Natural killer cell (primary cell): ENCODE measurements at regions of chr2 and their contacts with region 1.

Region 1: DNA sequence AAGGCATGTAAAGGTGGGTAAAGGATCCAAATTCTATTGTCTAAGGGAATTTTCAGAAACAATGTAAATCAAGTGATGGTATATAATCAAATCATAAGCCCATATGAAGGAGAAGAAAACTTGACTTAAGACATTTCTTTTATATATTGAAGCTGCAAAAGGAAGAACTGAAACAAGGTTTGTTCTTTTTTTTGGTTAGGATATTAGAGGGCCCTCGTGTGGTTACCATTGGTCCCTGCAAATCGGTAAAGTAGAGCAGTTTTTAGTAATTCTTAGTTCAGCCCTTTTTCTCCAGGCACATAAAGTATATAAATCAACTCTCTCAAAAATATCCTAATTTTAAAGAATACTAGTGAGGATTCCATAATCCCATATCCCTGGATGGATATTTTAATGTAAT is 105.6 kb upstream of the STK17B start:
- DNase-seq: peak in 1 of 2 donors; percentile 80
- ATAC-seq: peak; percentile 74 to 78 (median 77)
- H3K4me3 ChIP-seq: no peak overlapping the region
- H3K4me3 Mint-ChIP-seq: peak overlapping the region; percentile 47
- H3K27ac ChIP-seq: no peak overlapping the region
- H3K27ac Mint-ChIP-seq: peak overlapping the region in 1 of 2 donors; percentile 43
- H3K4me1 ChIP-seq: peaks cover 9% of the 10 kb centered on the region
- H3K4me1 Mint-ChIP-seq: peaks cover 17 to 31% of the 10 kb centered on the region in 2 donors
- H3K27me3 ChIP-seq: no peaks in the 10 kb centered on the region
- H3K27me3 Mint-ChIP-seq: peaks cover 0 to 3% of the 10 kb centered on the region in 2 donors
- CTCF ChIP-seq: peak; percentile 75

Region 2: GRCh38 chr2:195428673-195429072 is 848.3 kb before region 1 on chr2:
- intact Hi-C with region 1: no loop called
- DNase-seq: no peak
- ATAC-seq: no peak
- H3K4me3 ChIP-seq: no peak overlapping the region
- H3K4me3 Mint-ChIP-seq: no peak overlapping the region
- H3K27ac ChIP-seq: no peak overlapping the region
- H3K27ac Mint-ChIP-seq: no peak overlapping the region
- H3K4me1 ChIP-seq: no peaks in the 10 kb centered on the region
- H3K4me1 Mint-ChIP-seq: no peaks in the 10 kb centered on the region
- H3K27me3 ChIP-seq: no peaks in the 10 kb centered on the region
- H3K27me3 Mint-ChIP-seq: peaks cover 0 to 2% of the 10 kb centered on the region in 2 donors
- CTCF ChIP-seq: no peak

Region 3: GRCh38 chr2:196077821-196078220 is 199.2 kb before region 1 on chr2:
- intact Hi-C with region 1: loop called (anchors 1 kb)
- DNase-seq: no peak
- ATAC-seq: no peak
- H3K4me3 ChIP-seq: no peak overlapping the region
- H3K4me3 Mint-ChIP-seq: no peak overlapping the region
- H3K27ac ChIP-seq: no peak overlapping the region
- H3K27ac Mint-ChIP-seq: no peak overlapping the region
- H3K4me1 ChIP-seq: no peaks in the 10 kb centered on the region
- H3K4me1 Mint-ChIP-seq: no peaks in the 10 kb centered on the region
- H3K27me3 ChIP-seq: no peaks in the 10 kb centered on the region
- H3K27me3 Mint-ChIP-seq: no peaks in the 10 kb centered on the region
- CTCF ChIP-seq: no peak

Region 4: GRCh38 chr2:196131384-196131937 is 145.5 kb before region 1 on chr2:
- intact Hi-C with region 1: loop called (anchors 1 kb)
- DNase-seq: peak; percentile 49 to 81
- ATAC-seq: peak; percentile 61 to 66 (median 64)
- H3K4me3 ChIP-seq: no peak overlapping the region
- H3K4me3 Mint-ChIP-seq: no peak overlapping the region
- H3K27ac ChIP-seq: no peak overlapping the region
- H3K27ac Mint-ChIP-seq: peak overlapping the region; percentile 80 to 81
- H3K4me1 ChIP-seq: peaks cover 8% of the 10 kb centered on the region
- H3K4me1 Mint-ChIP-seq: peaks cover 18 to 25% of the 10 kb centered on the region in 2 donors
- H3K27me3 ChIP-seq: no peaks in the 10 kb centered on the region
- H3K27me3 Mint-ChIP-seq: no peaks in the 10 kb centered on the region
- CTCF ChIP-seq: peak; percentile 69

Region 5: GRCh38 chr2:196149948-196150347 is 127.1 kb before region 1 on chr2:
- intact Hi-C with region 1: loop called (anchors 5 kb)
- DNase-seq: peak in 1 of 2 donors; percentile 59
- ATAC-seq: peak in 2 of 3 donors; percentile 12 to 46
- H3K4me3 ChIP-seq: no peak overlapping the region
- H3K4me3 Mint-ChIP-seq: peak overlapping the region; percentile 63
- H3K27ac ChIP-seq: peak overlapping the region; percentile 49
- H3K27ac Mint-ChIP-seq: peak overlapping the region; percentile 79
- H3K4me1 ChIP-seq: peaks cover 28% of the 10 kb centered on the region
- H3K4me1 Mint-ChIP-seq: peaks cover 61% of the 10 kb centered on the region in 2 donors
- H3K27me3 ChIP-seq: no peaks in the 10 kb centered on the region
- H3K27me3 Mint-ChIP-seq: no peaks in the 10 kb centered on the region
- CTCF ChIP-seq: no peak

Region 6: DNA sequence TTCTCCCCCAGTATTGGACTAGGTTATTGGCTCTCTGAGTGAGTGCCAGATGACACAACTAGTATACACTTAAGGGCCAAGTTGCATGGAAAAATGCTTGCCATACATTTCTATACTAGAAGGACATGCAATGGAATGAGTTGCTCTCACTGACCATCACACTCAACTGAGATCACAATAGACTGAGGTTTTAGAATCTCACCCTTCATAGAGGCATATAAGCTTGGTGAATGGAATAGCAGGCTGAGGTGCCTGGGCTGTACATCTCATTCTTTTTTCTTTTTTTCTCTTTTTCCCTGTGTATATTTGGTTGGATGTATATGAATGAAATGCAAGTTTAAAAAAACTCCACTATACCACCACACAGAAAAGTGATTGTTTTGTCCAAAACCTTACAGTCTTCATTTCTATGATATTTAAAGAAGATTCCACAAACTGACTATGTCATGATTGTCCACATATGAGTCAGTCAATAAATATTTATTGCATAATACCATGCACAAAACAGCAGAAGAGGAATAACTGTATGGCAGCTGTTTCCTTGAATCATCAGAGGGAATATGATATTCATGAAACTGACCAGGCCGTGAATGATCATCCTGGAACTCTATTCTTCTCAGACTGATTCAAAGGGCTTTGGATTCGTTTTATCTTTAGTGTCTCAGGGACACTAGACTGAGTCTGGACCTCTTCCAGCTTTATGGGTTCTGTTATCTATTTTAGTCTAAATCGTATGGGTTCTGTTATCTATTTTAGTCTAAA is 16.9 kb after region 1 on chr2:
- intact Hi-C with region 1: no loop called
- DNase-seq: no peak
- ATAC-seq: no peak
- H3K4me3 ChIP-seq: no peak overlapping the region
- H3K4me3 Mint-ChIP-seq: no peak overlapping the region
- H3K27ac ChIP-seq: no peak overlapping the region
- H3K27ac Mint-ChIP-seq: no peak overlapping the region
- H3K4me1 ChIP-seq: peaks cover 12% of the 10 kb centered on the region
- H3K4me1 Mint-ChIP-seq: peaks cover 18 to 24% of the 10 kb centered on the region in 2 donors
- H3K27me3 ChIP-seq: no peaks in the 10 kb centered on the region
- H3K27me3 Mint-ChIP-seq: no peaks in the 10 kb centered on the region
- CTCF ChIP-seq: no peak